IMR-90 (cell line): ENCODE measurements at regions of chr1 and their contacts with region 1.

Region 1: GRCh38 chr1:240739139-240739538 is 127.2 kb upstream of the GREM2 start:
- DNase-seq: no peak
- ATAC-seq: peak; percentile 29; the same call in 1 of the 2 replicates
- H3K4me3 ChIP-seq: no peak overlapping the region
- H3K27ac ChIP-seq: no peak overlapping the region
- H3K4me1 ChIP-seq: peaks cover 3% of the 10 kb centered on the region; the same call in 1 of the 2 replicates
- H3K27me3 ChIP-seq: no peaks in the 10 kb centered on the region
- CTCF ChIP-seq: no peak
- POLR2A ChIP-seq: no peak
- RAD21 ChIP-seq: no peak

Region 2: DNA sequence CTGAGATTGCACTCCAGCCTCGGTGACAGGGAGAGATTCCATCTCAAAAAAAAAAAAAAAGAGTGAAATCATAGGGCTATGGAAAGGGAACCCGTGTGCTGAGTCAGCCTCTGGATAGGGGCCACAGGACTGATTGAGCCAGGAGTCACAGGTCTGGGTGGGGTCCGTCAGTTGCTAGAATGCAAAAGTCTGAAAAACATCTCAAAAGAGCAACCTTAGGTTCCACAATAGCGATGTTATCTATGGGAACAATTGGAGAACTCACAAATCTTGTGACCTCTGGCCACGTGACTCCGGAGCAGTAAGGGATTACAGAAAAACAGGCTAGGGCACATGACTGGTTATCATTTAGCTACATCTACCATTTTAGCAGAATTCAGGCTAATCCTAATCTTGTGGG is 94.4 kb before region 1 on chr1:
- CTCF ChIA-PET with region 1: no interaction called
- POLR2A ChIA-PET with region 1: no interaction called
- dilution Hi-C with region 1: no loop called
- in situ Hi-C with region 1: no loop called
- intact Hi-C with region 1: no loop called
- DNase-seq: no peak
- ATAC-seq: no peak
- H3K4me3 ChIP-seq: no peak overlapping the region
- H3K27ac ChIP-seq: no peak overlapping the region
- H3K4me1 ChIP-seq: no peaks in the 10 kb centered on the region
- H3K27me3 ChIP-seq: no peaks in the 10 kb centered on the region
- CTCF ChIP-seq: no peak
- POLR2A ChIP-seq: no peak
- RAD21 ChIP-seq: no peak

Region 3: GRCh38 chr1:240831191-240831631 is 92.1 kb after region 1 on chr1:
- CTCF ChIA-PET with region 1: no interaction called
- POLR2A ChIA-PET with region 1: no interaction called
- dilution Hi-C with region 1: no loop called
- in situ Hi-C with region 1: no loop called
- intact Hi-C with region 1: loop called (anchors 5 kb)
- DNase-seq: peak; percentile 53
- ATAC-seq: peak; percentile 54
- H3K4me3 ChIP-seq: no peak overlapping the region
- H3K27ac ChIP-seq: no peak overlapping the region
- H3K4me1 ChIP-seq: no peaks in the 10 kb centered on the region
- H3K27me3 ChIP-seq: no peaks in the 10 kb centered on the region
- CTCF ChIP-seq: no peak
- POLR2A ChIP-seq: no peak
- RAD21 ChIP-seq: no peak